Pancreas (tissue), 10 donors: ENCODE measurements at regions of chr20 and their contacts with region 1.

Region 1: GRCh38 chr20:49484180-49485140 is 2.0 kb upstream of the KCNB1 start:
- DNase-seq: peak; percentile 61 to 93 (median 80)
- ATAC-seq: peak; percentile 94
- H3K4me3 ChIP-seq: peak overlapping the region in 2 of 4 donors; percentile 4 to 45
- H3K27ac ChIP-seq: no peak overlapping the region
- H3K4me1 ChIP-seq: peaks cover 0 to 3% (median 0%) of the 10 kb centered on the region in 3 donors
- H3K27me3 ChIP-seq: peaks cover 0 to 22% (median 0%) of the 10 kb centered on the region in 4 donors
- CTCF ChIP-seq: peak; percentile 42 to 68 (median 56)

Region 2: DNA sequence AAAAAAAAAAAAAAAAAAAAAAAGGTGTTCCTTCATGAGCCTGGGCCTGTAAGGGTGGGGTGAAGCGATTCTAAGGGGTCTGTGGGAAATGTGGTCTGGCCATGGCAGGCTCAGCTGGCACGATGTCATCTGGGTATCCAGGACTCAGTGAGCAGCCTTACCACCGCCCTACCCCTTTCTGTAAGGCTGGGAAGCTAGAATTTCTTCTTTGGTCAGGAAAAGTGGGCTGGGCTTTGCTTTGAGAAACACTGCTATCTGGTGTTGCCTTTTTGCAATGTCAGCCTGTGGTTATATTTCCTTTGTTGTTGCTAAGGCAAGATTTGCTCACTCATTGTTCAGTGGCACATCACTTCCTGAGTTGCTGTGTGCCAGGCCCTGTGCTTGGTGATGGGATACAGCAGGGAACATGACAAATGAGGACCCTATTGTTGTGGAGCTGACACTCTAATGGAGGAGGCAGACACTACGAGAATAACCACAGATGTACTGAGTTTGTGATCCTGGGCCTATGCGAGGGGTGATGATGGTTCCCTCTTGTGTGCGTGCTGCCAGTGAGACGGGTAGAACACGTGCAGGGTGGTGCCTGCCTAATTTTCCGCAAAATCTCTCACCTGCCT is 160.7 kb before region 1 on chr20:
- intact Hi-C with region 1: loop called in 1 of 3 experiments (anchors 5 kb)
- DNase-seq: no peak
- ATAC-seq: peak in 3 of 4 donors; percentile 65 to 73 (median 66)
- H3K4me3 ChIP-seq: no peak overlapping the region
- H3K27ac ChIP-seq: no peak overlapping the region
- H3K4me1 ChIP-seq: peaks cover 0 to under 1% (median under 1%) of the 10 kb centered on the region in 3 donors
- H3K27me3 ChIP-seq: peaks cover 0 to 12% (median 5%) of the 10 kb centered on the region in 4 donors
- CTCF ChIP-seq: no peak

Region 3: GRCh38 chr20:49338061-49338460 is 146.4 kb before region 1 on chr20:
- intact Hi-C with region 1: loop called (anchors 5 to 10 kb)
- DNase-seq: no peak
- ATAC-seq: no peak
- H3K4me3 ChIP-seq: no peak overlapping the region
- H3K27ac ChIP-seq: no peak overlapping the region
- H3K4me1 ChIP-seq: no peaks in the 10 kb centered on the region
- H3K27me3 ChIP-seq: peaks cover 0 to 3% (median 0%) of the 10 kb centered on the region in 4 donors
- CTCF ChIP-seq: no peak

Region 4: GRCh38 chr20:49344975-49345374 is 139.5 kb before region 1 on chr20:
- intact Hi-C with region 1: loop called in 1 of 3 experiments (anchors 5 kb)
- DNase-seq: peak in 2 of 6 donors; percentile 21 to 30
- ATAC-seq: peak; percentile 77 to 84 (median 80)
- H3K4me3 ChIP-seq: no peak overlapping the region
- H3K27ac ChIP-seq: peak overlapping the region in 1 of 4 donors; percentile 44
- H3K4me1 ChIP-seq: no peaks in the 10 kb centered on the region
- H3K27me3 ChIP-seq: no peaks in the 10 kb centered on the region
- CTCF ChIP-seq: no peak